Esophagus muscularis mucosa (tissue), 4 donors: ENCODE measurements at regions of chr19 and their contacts with region 1.

Region 1: DNA sequence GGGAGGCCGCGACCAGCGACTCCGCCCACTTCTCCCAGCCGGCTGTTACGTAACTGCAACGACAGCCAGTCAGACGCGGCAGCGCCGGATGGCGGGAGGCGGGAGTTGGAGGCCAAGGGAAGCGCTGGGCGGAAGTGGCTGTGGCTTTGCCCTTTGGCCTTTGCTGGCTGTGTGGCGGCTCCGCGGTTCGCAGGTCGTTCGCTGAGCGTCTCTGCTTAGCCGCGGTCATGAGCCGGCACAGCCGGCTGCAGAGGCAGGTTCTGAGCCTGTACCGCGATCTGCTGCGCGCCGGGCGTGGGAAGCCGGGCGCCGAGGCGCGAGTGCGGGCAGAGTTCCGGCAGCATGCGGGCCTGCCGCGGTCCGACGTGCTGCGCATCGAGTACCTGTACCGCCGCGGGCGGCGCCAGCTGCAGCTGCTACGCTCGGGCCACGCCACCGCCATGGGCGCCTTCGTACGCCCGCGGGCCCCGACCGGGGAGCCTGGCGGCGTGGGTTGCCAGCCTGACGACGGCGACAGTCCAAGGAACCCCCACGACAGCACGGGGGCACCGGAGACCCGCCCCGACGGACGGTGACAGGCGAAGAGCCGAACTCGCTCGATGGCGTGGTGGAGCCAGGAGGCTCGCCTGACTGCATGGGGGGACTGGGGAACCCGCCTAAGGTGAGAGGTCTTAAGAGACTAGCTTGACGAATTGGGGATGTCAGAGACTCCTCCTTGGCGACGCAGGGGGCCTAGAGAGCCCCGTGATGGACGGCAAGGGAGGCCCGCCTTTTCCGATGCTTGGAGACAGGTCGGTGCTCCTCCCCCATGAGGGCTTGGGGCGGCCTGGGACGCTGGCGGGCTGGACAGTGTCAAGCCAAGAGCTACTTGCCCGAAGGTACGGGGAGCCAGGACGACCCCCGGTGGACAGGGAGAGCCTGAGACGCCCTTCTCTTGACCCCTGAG is at the start of gene SDHAF1:
- DNase-seq: peak; percentile 99
- H3K4me3 ChIP-seq: peak within 1 kb of the TSS; percentile 80 to 98 (median 87)
- H3K27ac ChIP-seq: peak within 1 kb of the TSS; percentile 90 to 96 (median 94)
- H3K4me1 ChIP-seq: peaks cover 32 to 62% (median 57%) of the 10 kb centered on the region in 4 donors
- H3K27me3 ChIP-seq: peaks cover 0 to under 1% (median 0%) of the 10 kb centered on the region in 4 donors
- CTCF ChIP-seq: no peak
- EP300 ChIP-seq: no peak
- POLR2A ChIP-seq: peak; percentile 61
- total RNA-seq, gene SDHAF1: 44.0 to 60.3 (median 50.2) TPM

Region 2: GRCh38 chr19:35949131-35949530 is 46.2 kb before region 1 on chr19:
- intact Hi-C with region 1: no loop called
- DNase-seq: no peak
- H3K4me3 ChIP-seq: no peak overlapping the region
- H3K27ac ChIP-seq: no peak overlapping the region
- H3K4me1 ChIP-seq: peaks cover 0 to 7% (median 0%) of the 10 kb centered on the region in 4 donors
- H3K27me3 ChIP-seq: peaks cover 0 to 14% (median 0%) of the 10 kb centered on the region in 4 donors
- CTCF ChIP-seq: no peak
- EP300 ChIP-seq: no peak
- POLR2A ChIP-seq: no peak

Region 3: GRCh38 chr19:36054733-36055686 is 59.7 kb after region 1 on chr19 and contains the start of gene WDR62:
- intact Hi-C with region 1: loop called (anchors 2 kb)
- DNase-seq: no peak
- H3K4me3 ChIP-seq: peak within 1 kb of the TSS; percentile 61 to 73 (median 68)
- H3K27ac ChIP-seq: peak within 1 kb of the TSS; percentile 87 to 95 (median 91)
- H3K4me1 ChIP-seq: peaks cover 7 to 29% (median 22%) of the 10 kb centered on the region in 4 donors
- H3K27me3 ChIP-seq: no peaks in the 10 kb centered on the region
- CTCF ChIP-seq: no peak
- EP300 ChIP-seq: no peak
- POLR2A ChIP-seq: no peak
- total RNA-seq, gene WDR62: 0.26 to 0.52 (median 0.50) TPM in 3 of 4 donors, not detected in the other

Region 4: GRCh38 chr19:36114763-36115452 is 119.6 kb after region 1 on chr19 and contains the start of gene POLR2I:
- intact Hi-C with region 1: loop called (anchors 5 kb)
- DNase-seq: peak; percentile 100
- H3K4me3 ChIP-seq: peak within 1 kb of the TSS; percentile 72 to 80 (median 74)
- H3K27ac ChIP-seq: peak within 1 kb of the TSS; percentile 88 to 96 (median 91)
- H3K4me1 ChIP-seq: peaks cover 23 to 53% (median 38%) of the 10 kb centered on the region in 4 donors
- H3K27me3 ChIP-seq: no peaks in the 10 kb centered on the region
- CTCF ChIP-seq: no peak
- EP300 ChIP-seq: no peak
- POLR2A ChIP-seq: peak; percentile 65
- total RNA-seq, gene POLR2I: 64.8 to 152 (median 85.7) TPM